ENCODE measurements at regions of chr1 and their contacts with region 1.

Region 1: DNA sequence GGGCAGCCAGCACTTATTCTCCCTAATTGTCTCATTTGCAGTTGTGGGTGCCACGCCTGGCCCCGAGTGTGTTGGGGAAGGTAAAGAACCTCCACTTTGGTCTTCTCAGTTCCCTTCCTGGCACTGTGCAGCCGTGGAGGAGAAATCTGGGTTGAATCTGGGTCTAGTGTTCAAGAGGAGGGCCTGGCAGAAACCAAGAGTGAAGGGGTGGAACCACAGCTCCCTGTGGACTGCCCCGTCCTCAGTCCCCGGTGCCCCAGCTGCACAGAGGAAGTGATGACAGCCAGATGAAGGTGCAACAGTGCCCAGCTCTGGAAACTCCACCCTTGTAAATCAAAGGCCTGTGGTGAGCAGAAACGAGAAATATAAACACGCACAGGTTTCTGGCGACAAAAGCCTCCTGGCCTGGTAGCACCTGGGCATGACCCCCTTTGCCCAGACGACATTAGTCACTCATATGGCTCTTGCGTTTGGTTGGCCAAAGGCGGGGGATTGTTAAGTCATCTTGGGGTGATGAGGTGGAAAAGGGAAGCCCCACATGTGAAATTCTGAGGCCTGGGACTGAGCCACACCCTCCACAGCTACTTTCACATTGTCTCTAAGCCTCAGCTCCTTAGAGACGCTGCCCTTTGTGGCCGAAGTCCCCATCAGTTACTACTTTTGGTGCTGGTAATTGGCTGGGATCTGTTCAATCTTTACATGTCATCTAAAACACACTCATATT is 4.2 kb upstream of the ECE1 start:
- DNase-seq: peak; percentile 57 to 95 (median 91)
- ATAC-seq: peak; percentile 87
- H3K4me3 ChIP-seq: peak overlapping the region; percentile 69
- H3K4me3 Mint-ChIP-seq: peak overlapping the region; percentile 81 to 97 (median 93)
- H3K27ac ChIP-seq: peak overlapping the region; percentile 94
- H3K27ac Mint-ChIP-seq: peak overlapping the region; percentile 91 to 100 (median 98)
- H3K4me1 ChIP-seq: peaks cover 60 to 62% of the 10 kb centered on the region in 2 donors
- H3K4me1 Mint-ChIP-seq: peaks cover 50 to 91% (median 84%) of the 10 kb centered on the region in 7 donors
- H3K27me3 ChIP-seq: no peaks in the 10 kb centered on the region
- H3K27me3 Mint-ChIP-seq: no peaks in the 10 kb centered on the region

Region 2: DNA sequence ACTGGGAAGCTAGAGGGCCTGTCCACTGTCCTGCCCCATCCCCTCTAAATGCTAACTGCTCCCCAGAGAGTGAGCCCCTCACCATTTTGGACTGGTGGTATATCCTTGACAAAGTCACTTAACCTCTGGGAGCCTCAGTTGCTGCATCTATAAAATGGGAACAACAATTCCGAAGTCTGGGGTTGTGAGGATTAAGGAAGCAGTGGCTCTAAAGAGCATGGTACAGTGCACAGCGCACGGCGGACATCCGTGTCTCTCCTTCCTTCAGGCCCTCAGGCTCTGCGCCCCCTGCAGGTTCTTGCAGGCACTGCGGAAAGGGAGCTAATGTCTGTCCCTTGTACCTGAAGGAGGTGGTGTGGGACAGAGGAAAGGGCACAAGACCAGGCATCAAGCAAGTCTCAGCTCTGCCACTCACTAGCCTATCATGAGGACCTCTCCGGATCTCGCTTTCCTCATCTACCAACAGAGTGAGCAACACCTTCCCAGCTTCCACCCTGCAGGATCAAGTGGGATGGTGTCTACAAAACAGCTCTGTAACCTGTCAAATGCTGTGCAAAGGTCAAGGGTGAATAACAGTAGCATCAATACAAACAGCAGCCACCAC is 24.2 kb before region 1 on chr1:
- CTCF ChIA-PET with region 1: interaction called, 38 read pairs
- POLR2A ChIA-PET with region 1: interaction called, 46 read pairs
- intact Hi-C with region 1: loop called in 1 of 2 experiments (anchors 1 kb)
- DNase-seq: peak; percentile 67 to 87 (median 80)
- ATAC-seq: peak; percentile 95
- H3K4me3 ChIP-seq: no peak overlapping the region
- H3K4me3 Mint-ChIP-seq: peak overlapping the region in 2 of 10 donors; percentile 6 to 48
- H3K27ac ChIP-seq: no peak overlapping the region
- H3K27ac Mint-ChIP-seq: peak overlapping the region; percentile 8 to 80 (median 48)
- H3K4me1 ChIP-seq: peaks cover 0 to 18% of the 10 kb centered on the region in 2 donors
- H3K4me1 Mint-ChIP-seq: peaks cover 13 to 34% (median 18%) of the 10 kb centered on the region in 7 donors
- H3K27me3 ChIP-seq: no peaks in the 10 kb centered on the region
- H3K27me3 Mint-ChIP-seq: no peaks in the 10 kb centered on the region

Region 3: DNA sequence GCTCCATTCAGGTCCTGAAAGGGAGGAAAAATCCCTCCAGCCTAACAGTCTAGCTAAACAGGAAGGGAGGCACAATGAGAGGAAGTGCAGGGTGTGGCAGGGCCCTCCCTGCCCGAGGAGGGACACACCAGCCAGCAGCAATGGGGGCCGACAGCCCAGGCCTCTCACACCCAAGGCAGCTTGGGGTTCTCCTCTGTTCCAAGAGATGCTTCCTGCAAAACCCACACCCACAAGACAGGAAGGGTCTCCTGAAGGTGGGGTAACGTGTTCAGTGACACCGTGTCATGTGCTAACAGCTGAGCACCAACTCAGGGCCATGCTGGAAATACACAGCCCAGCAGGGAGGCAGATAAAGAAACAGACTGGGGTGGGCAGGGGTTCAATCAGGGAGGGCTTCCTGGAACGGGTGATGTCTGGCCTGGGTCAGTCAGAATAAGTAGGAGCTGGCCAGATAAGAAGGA is 14.4 kb before region 1 on chr1:
- CTCF ChIA-PET with region 1: interaction called, 3 read pairs
- POLR2A ChIA-PET with region 1: interaction called, 56 read pairs
- intact Hi-C with region 1: loop called in 1 of 2 experiments (anchors 1 kb)
- DNase-seq: peak in 4 of 9 donors; percentile 15 to 22 (median 18)
- ATAC-seq: peak; percentile 68
- H3K4me3 ChIP-seq: peak overlapping the region; percentile 21
- H3K4me3 Mint-ChIP-seq: peak overlapping the region; percentile 61 to 82 (median 75)
- H3K27ac ChIP-seq: peak overlapping the region; percentile 66
- H3K27ac Mint-ChIP-seq: peak overlapping the region; percentile 93 to 99 (median 95)
- H3K4me1 ChIP-seq: peaks cover 34 to 37% of the 10 kb centered on the region in 2 donors
- H3K4me1 Mint-ChIP-seq: peaks cover 29 to 61% (median 54%) of the 10 kb centered on the region in 7 donors
- H3K27me3 ChIP-seq: no peaks in the 10 kb centered on the region
- H3K27me3 Mint-ChIP-seq: no peaks in the 10 kb centered on the region

Region 4: GRCh38 chr1:21305900-21306189 is 11.4 kb after region 1 on chr1:
- CTCF ChIA-PET with region 1: no interaction called
- POLR2A ChIA-PET with region 1: interaction called, 427 read pairs
- intact Hi-C with region 1: loop called in 1 of 2 experiments (anchors 1 kb)
- DNase-seq: no peak
- ATAC-seq: no peak
- H3K4me3 ChIP-seq: no peak overlapping the region
- H3K4me3 Mint-ChIP-seq: no peak overlapping the region
- H3K27ac ChIP-seq: no peak overlapping the region
- H3K27ac Mint-ChIP-seq: peak overlapping the region in 1 of 9 donors; percentile 60
- H3K4me1 ChIP-seq: peaks cover 7 to 45% of the 10 kb centered on the region in 2 donors
- H3K4me1 Mint-ChIP-seq: peaks cover 31 to 82% (median 72%) of the 10 kb centered on the region in 7 donors
- H3K27me3 ChIP-seq: no peaks in the 10 kb centered on the region
- H3K27me3 Mint-ChIP-seq: no peaks in the 10 kb centered on the region

Region 5: GRCh38 chr1:21324368-21325141 is 30.1 kb after region 1 on chr1:
- CTCF ChIA-PET with region 1: interaction called, 37 read pairs
- POLR2A ChIA-PET with region 1: interaction called, 427 read pairs
- intact Hi-C with region 1: loop called (anchors 1 kb)
- DNase-seq: peak in 8 of 9 donors; percentile 42 to 78 (median 56)
- ATAC-seq: peak; percentile 70
- H3K4me3 ChIP-seq: peak overlapping the region; percentile 25
- H3K4me3 Mint-ChIP-seq: peak overlapping the region; percentile 72 to 88 (median 84)
- H3K27ac ChIP-seq: peak overlapping the region; percentile 75
- H3K27ac Mint-ChIP-seq: peak overlapping the region; percentile 85 to 97 (median 95)
- H3K4me1 ChIP-seq: peaks cover 38 to 60% of the 10 kb centered on the region in 2 donors
- H3K4me1 Mint-ChIP-seq: peaks cover 43 to 99% (median 83%) of the 10 kb centered on the region in 7 donors
- H3K27me3 ChIP-seq: no peaks in the 10 kb centered on the region
- H3K27me3 Mint-ChIP-seq: no peaks in the 10 kb centered on the region

Region 6: GRCh38 chr1:21334214-21335087 is 40.0 kb after region 1 on chr1:
- CTCF ChIA-PET with region 1: interaction called, 45 read pairs
- POLR2A ChIA-PET with region 1: interaction called, 148 read pairs
- intact Hi-C with region 1: loop called (anchors 1 kb)
- DNase-seq: peak; percentile 58 to 84 (median 76)
- ATAC-seq: peak; percentile 88
- H3K4me3 ChIP-seq: peak overlapping the region; percentile 74
- H3K4me3 Mint-ChIP-seq: peak overlapping the region; percentile 82 to 97 (median 91)
- H3K27ac ChIP-seq: peak overlapping the region; percentile 81
- H3K27ac Mint-ChIP-seq: peak overlapping the region; percentile 92 to 99 (median 97)
- H3K4me1 ChIP-seq: peaks cover 41 to 78% of the 10 kb centered on the region in 2 donors
- H3K4me1 Mint-ChIP-seq: peaks cover 55 to 95% (median 85%) of the 10 kb centered on the region in 7 donors
- H3K27me3 ChIP-seq: no peaks in the 10 kb centered on the region
- H3K27me3 Mint-ChIP-seq: no peaks in the 10 kb centered on the region

Measured in naive thymus-derived CD4-positive, alpha-beta T cell (primary cell).